RWPE1 (cell line): ENCODE measurements at regions of chr5 and their contacts with region 1.

Region 1: GRCh38 chr5:57887851-57888621 is 405.4 kb upstream of the ACTBL2 start:
- DNase-seq: peak; percentile 87
- H3K27ac ChIP-seq: peak overlapping the region; percentile 42; the same call in 1 of the 2 replicates
- CTCF ChIP-seq: peak; percentile 90

Region 2: GRCh38 chr5:57900381-57900944 is 12.4 kb after region 1 on chr5:
- CTCF ChIA-PET with region 1: no interaction called
- POLR2A ChIA-PET with region 1: no interaction called
- DNase-seq: no peak
- H3K27ac ChIP-seq: no peak overlapping the region
- CTCF ChIP-seq: no peak

Region 3: GRCh38 chr5:57915536-57915935 is 27.5 kb after region 1 on chr5:
- CTCF ChIA-PET with region 1: no interaction called
- POLR2A ChIA-PET with region 1: no interaction called
- DNase-seq: no peak
- H3K27ac ChIP-seq: no peak overlapping the region
- CTCF ChIP-seq: no peak

Region 4: DNA sequence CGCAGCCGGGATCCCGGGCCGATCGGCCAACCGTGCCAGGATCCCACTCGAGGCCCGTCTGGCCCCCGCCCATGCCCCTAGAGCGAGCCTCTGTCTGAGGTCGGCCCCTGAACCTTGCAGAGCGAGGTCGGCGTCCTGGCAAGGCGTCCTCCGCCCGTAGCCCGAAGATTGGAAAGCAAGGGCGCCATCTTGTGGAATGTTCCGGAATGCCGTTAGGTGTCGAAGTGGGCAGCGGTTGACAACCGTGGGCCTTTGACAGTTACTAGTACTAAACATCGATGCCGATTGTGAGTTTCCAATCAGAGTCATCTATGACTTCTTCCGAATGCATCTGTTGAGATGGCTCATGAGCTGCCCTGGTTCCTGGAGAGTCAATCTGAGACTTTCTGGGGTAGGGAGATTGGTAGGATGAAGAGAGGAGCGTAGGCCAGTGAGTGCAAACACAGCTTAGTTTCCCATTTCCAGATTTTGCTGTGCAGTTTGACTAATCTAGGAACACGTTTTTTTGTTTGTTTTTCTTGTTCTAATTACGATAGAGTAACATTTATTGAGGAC is 572.8 kb after region 1 on chr5:
- CTCF ChIA-PET with region 1: interaction called, 40 read pairs
- POLR2A ChIA-PET with region 1: interaction called, 6 read pairs
- DNase-seq: peak; percentile 87
- H3K27ac ChIP-seq: peak overlapping the region; percentile 94
- CTCF ChIP-seq: peak; percentile 89